ENCODE measurements at regions of chr15 and their contacts with region 1.

Region 1: GRCh38 chr15:48352474-48353072 is 21.3 kb downstream of the DUT start:
- DNase-seq: peak in 1 of 2 donors; percentile 57
- ATAC-seq: no peak
- H3K4me3 ChIP-seq: no peak overlapping the region
- H3K27ac ChIP-seq: no peak overlapping the region
- H3K4me1 ChIP-seq: no peaks in the 10 kb centered on the region
- H3K27me3 ChIP-seq: no peaks in the 10 kb centered on the region

Region 2: DNA sequence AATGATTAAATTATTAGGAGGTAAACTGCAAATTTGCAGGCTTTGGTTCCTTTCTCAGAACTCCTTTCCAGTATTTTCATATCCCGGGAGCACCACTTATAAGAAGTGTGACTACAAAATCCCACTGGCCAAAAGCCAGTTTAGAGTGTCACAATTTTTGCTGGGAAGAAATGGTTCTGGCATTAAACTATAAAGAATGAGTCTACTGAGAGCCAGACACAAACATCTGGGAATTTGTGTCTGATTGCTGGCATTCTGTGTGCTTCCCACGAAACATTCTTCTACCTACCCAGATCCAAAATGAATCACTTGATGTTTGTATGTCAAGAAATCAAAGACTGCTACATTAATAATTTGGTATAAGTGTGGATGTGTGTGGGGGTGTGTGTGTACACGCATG is 61.4 kb after region 1 on chr15:
- intact Hi-C with region 1: loop called (anchors 5 to 10 kb)
- DNase-seq: no peak
- ATAC-seq: peak; percentile 49
- H3K4me3 ChIP-seq: no peak overlapping the region
- H3K27ac ChIP-seq: peak overlapping the region in 1 of 2 donors; percentile 14
- H3K4me1 ChIP-seq: peaks cover 9 to 12% of the 10 kb centered on the region in 2 donors
- H3K27me3 ChIP-seq: no peaks in the 10 kb centered on the region

Region 3: DNA sequence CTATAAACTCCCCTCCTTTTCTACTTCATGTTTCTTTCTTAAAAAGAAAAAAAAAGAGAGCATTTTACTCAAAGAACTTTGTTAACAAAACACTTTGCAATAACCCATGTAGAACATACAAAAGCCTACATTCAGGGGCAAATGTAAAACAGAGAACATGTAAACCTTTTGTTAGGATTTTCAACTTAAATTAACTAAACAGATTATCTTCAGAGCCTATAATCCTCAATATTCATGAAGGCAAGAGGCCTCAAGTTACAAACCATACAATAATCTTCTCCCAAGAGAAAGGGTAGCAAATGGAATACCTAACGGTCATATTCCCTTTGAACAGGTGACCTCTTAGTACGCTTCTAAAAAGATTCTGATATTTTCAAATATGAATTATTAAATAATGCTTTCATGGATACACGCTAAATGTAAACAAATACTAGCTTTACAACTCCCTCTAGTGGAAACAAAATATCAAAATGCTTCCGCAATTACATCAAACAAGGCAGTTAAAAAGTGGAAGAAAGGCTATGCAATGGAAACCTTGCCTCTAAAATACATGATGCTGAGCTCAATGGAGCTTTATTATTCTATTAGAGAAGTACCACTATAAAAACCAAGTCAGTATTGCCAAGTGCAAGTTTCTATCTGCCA is 448.4 kb after region 1 on chr15:
- intact Hi-C with region 1: loop called in 1 of 2 experiments (anchors 10 kb)
- DNase-seq: no peak
- ATAC-seq: peak; percentile 74
- H3K4me3 ChIP-seq: no peak overlapping the region
- H3K27ac ChIP-seq: no peak overlapping the region
- H3K4me1 ChIP-seq: no peaks in the 10 kb centered on the region
- H3K27me3 ChIP-seq: no peaks in the 10 kb centered on the region

Region 4: DNA sequence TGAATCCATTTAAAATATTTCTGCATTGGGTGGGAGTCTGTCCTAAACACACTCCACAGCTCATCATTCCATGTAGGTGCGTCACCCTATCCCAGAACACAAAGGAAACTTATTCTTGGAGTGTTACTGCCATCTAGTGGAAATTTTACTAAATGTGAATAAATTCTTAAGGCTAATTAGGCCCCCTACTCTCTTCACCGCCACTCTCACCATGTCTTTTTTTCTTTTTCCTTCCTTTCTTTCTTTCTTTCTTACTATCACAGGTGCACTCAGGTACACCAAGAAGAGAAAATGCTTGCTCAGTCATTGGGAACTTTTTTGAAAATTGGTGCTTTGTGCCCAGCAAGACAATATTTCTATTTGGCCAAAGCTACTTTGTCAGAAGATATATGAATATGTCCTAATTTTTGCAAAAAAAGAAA is 1792.9 kb after region 1 on chr15:
- intact Hi-C with region 1: loop called in 1 of 2 experiments (anchors 10 kb)
- DNase-seq: no peak
- ATAC-seq: peak; percentile 91
- H3K4me3 ChIP-seq: no peak overlapping the region
- H3K27ac ChIP-seq: no peak overlapping the region
- H3K4me1 ChIP-seq: no peaks in the 10 kb centered on the region
- H3K27me3 ChIP-seq: no peaks in the 10 kb centered on the region